Endothelial cell of umbilical vein (primary cell): ENCODE measurements at regions of chr17 and their contacts with region 1.

Region 1: DNA sequence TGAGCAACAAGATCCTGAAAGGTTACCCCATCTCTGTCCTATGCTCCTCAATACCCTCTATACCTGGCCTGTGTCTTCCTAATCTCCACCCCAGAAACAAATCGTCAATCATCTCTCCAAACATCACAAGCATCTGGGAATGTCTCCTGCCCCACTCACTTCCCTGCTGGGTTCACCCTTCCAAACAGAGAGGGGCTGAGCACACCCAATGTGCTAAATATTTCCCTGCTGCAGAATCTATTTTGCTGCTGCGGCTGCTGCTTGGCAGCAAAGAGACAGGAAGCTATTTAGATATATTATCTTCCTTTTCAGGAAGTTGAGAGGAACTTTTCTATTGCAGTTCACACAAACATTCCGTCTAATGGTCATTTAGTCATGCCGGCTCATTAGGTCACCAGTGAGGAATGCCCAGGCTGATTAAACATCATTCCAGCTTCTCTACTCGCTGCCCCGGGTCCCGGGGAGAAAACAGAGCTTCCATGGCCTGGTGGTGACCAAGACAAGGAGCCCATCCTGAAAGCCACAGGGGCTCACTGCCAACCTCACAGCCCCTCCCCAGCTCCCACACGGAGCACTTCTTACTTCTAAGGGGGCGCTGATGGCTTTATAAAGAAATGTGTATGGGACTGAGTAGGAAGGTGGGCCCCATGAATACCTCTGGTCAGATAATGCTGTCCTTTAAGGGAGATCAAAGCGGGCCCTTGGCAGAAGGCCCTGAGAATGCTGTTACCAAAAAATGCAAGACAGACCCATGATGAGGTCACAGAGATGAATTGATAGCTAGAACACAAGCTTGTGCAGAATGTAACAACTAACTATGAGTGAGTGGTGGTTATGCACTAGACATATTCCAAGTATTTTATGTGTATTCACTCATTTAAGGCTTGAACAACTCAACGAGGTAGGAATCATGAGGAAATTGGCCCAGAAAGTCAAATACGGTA is 218.3 kb downstream of the SOX9 start:
- DNase-seq: peak; percentile 41
- H3K4me3 ChIP-seq: no peak overlapping the region
- H3K27ac ChIP-seq: no peak overlapping the region
- H3K4me1 ChIP-seq: peaks cover 10% of the 10 kb centered on the region
- H3K27me3 ChIP-seq: peaks cover 7 to 37% of the 10 kb centered on the region in 2 experiments
- CTCF ChIP-seq: no peak
- POLR2A ChIP-seq: no peak

Region 2: DNA sequence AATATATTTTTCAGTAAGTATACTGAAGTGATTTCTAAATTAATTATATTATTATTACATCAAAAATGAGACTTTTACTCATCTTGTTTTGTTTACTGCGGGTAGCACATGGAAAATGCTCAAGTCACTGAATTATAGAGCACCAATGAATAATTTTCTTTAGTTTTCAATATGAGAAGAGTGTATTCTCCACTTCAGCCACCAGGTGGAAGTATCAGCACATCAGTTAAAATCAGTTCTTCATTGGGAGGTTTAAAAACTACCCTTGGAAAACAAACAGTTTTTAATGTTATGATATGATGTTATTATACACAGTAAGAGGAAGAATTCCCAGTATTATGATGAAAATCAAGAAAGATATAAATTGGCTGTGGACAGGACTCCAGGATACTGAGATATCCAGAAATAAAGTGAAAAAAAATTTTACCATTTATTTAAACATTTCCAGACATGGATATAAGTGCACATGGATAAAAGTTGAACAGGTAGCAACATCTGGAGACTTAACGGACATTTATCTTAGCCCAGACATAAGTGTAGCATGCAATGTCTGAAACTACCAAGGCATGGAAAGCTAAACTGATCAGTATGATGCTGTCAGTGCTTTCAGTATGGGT is 1702.5 kb before region 1 on chr17:
- CTCF ChIA-PET with region 1: no interaction called
- POLR2A ChIA-PET with region 1: no interaction called
- dilution Hi-C with region 1: no loop called
- intact Hi-C with region 1: loop called (anchors 10 kb)
- DNase-seq: peak; percentile 61
- H3K4me3 ChIP-seq: no peak overlapping the region
- H3K27ac ChIP-seq: no peak overlapping the region
- H3K4me1 ChIP-seq: no peaks in the 10 kb centered on the region
- H3K27me3 ChIP-seq: peaks cover 2 to 8% of the 10 kb centered on the region in 2 experiments
- CTCF ChIP-seq: peak; percentile 31 to 45
- POLR2A ChIP-seq: no peak

Region 3: DNA sequence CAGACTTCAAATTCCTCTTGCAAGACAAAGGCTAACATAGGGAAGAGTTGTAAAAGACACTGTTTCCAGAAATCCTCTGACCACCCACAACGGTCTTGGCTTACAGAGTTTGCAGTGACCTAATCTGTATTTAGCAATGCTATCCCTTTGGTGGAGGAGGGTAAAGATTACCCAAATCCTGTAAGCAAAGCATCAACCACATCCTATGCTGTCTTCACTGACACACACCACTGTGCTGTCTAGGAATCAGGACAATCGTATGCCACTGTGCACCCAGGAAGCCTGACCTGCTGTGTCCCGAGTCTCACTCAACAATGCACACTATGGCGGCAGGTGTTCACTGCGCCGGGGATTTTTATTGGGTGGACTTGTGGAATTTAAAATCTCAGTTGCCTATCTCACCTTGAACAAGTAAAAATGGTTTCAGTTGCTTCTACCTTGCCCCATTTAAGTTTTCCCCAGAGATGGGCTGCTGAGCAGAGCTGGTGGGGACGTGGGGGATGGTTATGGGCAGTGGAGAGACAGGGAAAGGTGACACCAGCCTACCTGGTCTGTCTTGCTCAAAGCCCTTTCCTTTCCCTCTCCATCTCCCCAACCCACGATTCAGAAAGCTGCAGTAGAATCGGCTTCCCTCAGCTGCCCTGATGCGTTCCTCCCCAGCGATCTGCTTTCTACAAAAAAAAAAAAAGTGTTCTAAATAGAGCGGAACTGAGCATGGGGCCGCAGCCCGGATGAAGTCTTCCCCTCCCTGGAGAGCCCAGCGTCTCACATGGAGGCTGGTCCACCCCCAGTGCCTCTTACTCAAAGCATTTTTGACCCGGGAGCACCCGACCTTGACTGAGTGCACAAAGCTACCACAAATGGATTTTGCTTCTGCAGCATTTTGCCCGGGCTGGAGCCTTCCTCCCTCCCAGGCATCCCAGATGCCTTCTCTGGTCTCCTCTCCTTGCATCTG is 53.2 kb after region 1 on chr17:
- CTCF ChIA-PET with region 1: interaction called, 3 read pairs
- POLR2A ChIA-PET with region 1: no interaction called
- dilution Hi-C with region 1: no loop called
- intact Hi-C with region 1: loop called (anchors 5 kb)
- DNase-seq: no peak
- H3K4me3 ChIP-seq: no peak overlapping the region
- H3K27ac ChIP-seq: no peak overlapping the region
- H3K4me1 ChIP-seq: peaks cover 19% of the 10 kb centered on the region
- H3K27me3 ChIP-seq: no peaks in the 10 kb centered on the region
- CTCF ChIP-seq: no peak
- POLR2A ChIP-seq: no peak

Region 4: GRCh38 chr17:72407336-72407909 is 68.3 kb after region 1 on chr17:
- CTCF ChIA-PET with region 1: interaction called, 5 read pairs
- POLR2A ChIA-PET with region 1: no interaction called
- dilution Hi-C with region 1: no loop called
- intact Hi-C with region 1: loop called (anchors 2 kb)
- DNase-seq: peak; percentile 50
- H3K4me3 ChIP-seq: no peak overlapping the region
- H3K27ac ChIP-seq: no peak overlapping the region
- H3K4me1 ChIP-seq: peaks cover 5% of the 10 kb centered on the region
- H3K27me3 ChIP-seq: no peaks in the 10 kb centered on the region
- CTCF ChIP-seq: no peak
- POLR2A ChIP-seq: no peak

Region 5: DNA sequence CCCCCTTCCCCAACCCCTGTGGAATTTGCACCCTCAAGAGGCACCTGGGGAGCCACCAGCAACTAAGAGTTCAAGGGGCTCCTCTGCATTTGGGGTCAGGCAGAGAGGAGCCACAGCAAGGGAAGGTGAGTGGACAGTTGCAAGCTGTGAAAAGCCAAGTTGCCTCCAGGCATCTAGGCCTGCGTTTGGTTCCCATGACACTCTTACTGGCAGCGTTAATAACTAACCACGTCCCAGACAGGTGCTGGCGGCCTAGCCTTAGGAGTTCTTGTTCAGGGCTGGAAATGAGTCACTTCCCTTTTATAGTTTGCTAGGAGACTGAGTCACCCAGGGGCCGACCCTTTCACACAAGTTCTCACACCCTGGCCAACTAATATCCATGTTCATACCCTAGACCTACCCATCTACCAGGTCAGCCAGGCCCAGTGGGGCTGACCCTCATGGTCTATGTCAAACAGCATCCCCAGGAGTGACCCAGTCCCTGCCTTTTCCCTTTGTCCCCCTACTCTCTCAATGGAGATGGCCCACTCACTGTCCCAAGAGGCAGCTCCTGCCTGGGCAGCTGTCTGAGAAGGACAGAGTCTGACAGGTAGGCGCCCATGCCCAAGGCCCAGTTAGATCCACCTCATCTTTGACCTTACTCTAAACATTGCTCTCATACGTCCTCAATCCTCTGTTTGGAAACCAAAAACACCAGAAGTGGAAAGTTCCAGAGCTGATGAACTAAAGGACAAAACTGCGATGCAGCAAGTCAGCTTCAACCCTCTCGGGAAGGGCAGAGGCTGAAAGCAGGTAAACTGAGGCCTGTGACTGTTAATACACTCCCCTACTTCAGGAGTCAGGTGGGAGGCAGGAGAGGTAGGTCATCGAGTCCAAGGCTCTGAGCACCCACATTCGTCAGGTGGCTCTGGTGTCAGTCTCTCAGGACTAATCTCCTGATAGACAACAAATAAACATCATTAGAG is 82.3 kb after region 1 on chr17:
- CTCF ChIA-PET with region 1: no interaction called
- POLR2A ChIA-PET with region 1: no interaction called
- dilution Hi-C with region 1: no loop called
- intact Hi-C with region 1: loop called (anchors 1 kb)
- DNase-seq: peak; percentile 80
- H3K4me3 ChIP-seq: no peak overlapping the region
- H3K27ac ChIP-seq: peak overlapping the region; percentile 85
- H3K4me1 ChIP-seq: peaks cover 16% of the 10 kb centered on the region
- H3K27me3 ChIP-seq: no peaks in the 10 kb centered on the region
- CTCF ChIP-seq: no peak
- POLR2A ChIP-seq: no peak

Region 6: DNA sequence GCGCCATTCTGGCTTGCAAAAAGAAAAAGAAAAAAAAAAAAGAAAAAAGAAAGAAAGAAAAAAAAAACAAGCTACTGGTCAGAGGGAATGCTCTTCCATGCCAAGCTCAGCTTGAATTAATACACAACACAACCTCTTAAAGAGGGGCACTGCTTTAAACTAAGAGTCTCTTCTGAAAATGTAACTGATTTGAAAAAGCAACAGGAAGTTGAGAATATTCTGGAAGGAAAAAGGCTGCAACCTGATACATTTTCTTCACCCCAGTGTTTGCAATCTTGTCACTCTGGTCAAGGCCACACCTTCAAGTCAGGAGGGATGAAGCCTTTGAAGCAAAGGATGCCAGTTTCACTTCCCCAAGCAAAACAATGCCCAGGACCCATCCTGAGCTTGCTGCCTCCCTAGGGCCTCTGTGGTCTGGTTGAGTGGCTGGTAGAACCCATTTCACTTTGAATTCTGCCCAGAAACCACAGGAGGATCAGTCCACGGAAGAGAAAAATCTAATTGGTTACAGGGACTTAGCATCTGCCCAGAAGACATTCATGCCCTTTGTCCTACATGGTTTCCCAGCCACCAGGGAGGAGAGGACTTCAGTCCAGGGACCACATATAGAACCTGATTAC is 171.4 kb after region 1 on chr17:
- CTCF ChIA-PET with region 1: no interaction called
- POLR2A ChIA-PET with region 1: no interaction called
- dilution Hi-C with region 1: no loop called
- intact Hi-C with region 1: no loop called
- DNase-seq: no peak
- H3K4me3 ChIP-seq: no peak overlapping the region
- H3K27ac ChIP-seq: no peak overlapping the region
- H3K4me1 ChIP-seq: no peaks in the 10 kb centered on the region
- H3K27me3 ChIP-seq: no peaks in the 10 kb centered on the region
- CTCF ChIP-seq: no peak
- POLR2A ChIP-seq: no peak